ENCODE measurements at regions of chr11 and their contacts with region 1.

Region 1: DNA sequence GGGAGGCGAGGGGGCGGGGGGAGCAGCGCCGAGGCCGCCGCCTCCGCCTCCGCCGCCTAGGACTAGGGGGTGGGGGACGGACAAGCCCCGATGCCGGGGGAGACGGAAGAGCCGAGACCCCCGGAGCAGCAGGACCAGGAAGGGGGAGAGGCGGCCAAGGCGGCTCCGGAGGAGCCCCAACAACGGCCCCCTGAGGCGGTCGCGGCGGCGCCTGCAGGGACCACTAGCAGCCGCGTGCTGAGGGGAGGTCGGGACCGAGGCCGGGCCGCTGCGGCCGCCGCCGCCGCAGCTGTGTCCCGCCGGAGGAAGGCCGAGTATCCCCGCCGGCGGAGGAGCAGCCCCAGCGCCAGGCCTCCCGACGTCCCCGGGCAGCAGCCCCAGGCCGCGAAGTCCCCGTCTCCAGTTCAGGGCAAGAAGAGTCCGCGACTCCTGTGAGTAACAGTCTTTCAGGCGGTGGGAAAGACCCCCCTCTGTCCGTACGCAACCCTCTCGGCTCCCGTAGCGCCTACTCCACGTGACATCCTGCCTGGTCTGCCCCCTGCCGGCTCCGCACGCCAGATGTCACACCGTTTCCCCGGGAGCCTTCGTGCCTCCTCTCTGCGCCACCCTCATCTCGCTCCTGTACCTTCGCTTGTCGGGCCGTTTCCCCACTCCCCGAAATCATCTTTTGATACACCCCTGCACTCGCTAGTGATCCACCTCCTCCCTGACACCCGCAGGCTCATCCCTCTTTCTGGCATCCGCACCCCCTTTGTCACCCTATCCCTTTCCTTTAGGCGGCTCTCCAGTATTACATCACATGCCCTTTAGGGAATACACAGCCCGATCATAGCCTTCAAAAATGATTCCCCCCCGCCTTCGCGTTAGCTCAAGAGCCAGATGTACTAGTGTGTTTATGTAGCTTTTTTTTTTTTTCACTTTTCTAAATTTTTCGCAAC is 598 bp downstream of the ZFP91 start:
- DNase-seq: peak; percentile 94 to 96 (median 95)
- ATAC-seq: peak; percentile 43 to 78 (median 69)
- H3K4me3 ChIP-seq: peak overlapping the region; percentile 78 to 100 (median 90)
- H3K27ac ChIP-seq: peak overlapping the region; percentile 98 to 100 (median 99)
- H3K4me1 ChIP-seq: peaks cover 5 to 76% (median 53%) of the 10 kb centered on the region in 12 donors
- H3K27me3 ChIP-seq: no peaks in the 10 kb centered on the region
- CTCF ChIP-seq: peak; percentile 62 to 94 (median 80)
- POLR2A ChIP-seq: peak in 1 of 2 donors; percentile 47

Region 2: DNA sequence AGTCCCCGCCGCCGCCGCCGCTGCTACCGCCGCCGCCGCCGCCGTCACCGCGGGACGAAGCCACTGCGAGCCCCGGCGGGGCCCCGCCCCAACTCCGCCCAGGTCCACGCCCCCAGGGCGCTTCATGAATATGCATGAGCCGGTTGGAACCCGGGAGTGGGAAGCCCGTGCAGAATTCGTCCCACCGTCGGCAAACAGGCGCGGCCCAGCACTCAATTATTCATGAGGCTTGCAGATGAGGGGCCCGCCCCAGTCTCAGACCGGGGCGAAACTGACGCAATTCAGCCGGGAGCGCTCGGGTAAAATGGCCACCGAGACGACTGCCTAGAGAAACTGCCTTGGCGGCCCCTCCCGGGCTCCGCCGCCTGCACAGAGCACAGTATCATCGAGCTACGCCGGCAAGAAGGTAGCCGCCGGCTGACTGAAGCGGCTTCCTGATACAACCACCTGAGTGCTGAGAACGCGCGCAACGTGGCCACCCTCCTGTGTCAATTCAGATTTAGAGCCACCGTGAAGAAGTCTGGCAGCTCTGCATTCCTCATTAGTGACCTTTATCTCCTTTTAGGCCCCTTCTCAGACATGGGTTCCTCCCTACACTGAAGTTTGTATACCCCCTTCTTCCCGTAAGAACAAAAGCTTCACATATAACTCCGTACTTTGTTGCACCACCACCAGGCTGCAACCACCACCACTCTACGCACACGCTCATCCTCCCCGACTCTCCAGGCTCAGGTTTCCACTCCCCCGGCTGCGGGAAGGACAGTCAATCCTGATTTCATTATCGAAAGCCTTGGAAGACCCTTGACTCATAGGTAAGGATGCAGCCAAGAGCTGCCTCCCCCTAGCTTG is 1254.4 kb before region 1 on chr11 and contains the start of gene TNKS1BP1:
- intact Hi-C with region 1: loop called in 1 of 10 experiments (anchors 10 kb)
- DNase-seq: peak; percentile 97 to 98 (median 98)
- ATAC-seq: peak; percentile 84 to 90 (median 88)
- H3K4me3 ChIP-seq: peak within 1 kb of the TSS; percentile 67 to 89 (median 75)
- H3K27ac ChIP-seq: peak within 1 kb of the TSS; percentile 88 to 98 (median 94)
- H3K4me1 ChIP-seq: peaks cover 4 to 55% (median 32%) of the 10 kb centered on the region in 12 donors
- H3K27me3 ChIP-seq: no peaks in the 10 kb centered on the region
- CTCF ChIP-seq: peak in 1 of 12 donors; percentile 11
- POLR2A ChIP-seq: peak; percentile 9 to 90
- total RNA-seq, gene TNKS1BP1: 25.3 to 68.3 (median 33.1) TPM

Region 3: DNA sequence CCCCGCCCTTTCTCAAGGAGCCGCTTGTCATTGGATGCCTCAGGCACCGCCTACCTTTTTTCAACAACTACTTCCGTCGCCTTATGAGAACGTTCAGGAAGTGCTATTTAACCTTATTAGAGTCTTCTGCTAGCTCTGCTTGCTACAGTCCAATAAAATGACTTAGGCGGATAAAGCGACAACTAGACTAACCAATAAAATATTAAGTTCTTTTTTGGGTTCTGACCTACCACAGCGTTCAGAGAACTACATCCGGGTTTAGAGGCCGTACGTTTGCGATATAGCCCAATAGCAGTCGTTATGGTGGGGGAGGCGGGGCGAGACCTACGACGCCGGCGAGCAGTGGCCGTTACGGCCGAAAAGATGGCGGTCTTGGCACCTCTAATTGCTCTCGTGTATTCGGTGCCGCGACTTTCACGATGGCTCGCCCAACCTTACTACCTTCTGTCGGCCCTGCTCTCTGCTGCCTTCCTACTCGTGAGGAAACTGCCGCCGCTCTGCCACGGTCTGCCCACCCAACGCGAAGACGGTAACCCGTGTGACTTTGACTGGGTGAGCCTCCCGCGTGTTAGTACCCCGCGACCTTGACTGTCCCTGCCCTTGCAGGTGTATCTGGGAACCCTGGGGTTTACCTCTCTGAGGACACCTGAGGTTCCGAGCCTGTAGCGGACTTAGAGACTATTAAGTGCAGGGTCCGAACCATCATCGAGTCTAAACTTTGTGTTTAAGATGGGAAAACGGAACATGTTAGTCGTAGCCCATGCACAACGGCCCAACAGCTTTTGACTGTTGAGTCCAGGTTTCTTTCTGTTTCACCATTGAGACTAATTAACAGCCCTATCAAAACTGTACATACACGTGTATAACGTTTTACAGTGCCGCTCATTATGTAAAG is 867.0 kb before region 1 on chr11 and contains the start of gene TMX2:
- intact Hi-C with region 1: loop called in 1 of 10 experiments (anchors 5 kb)
- DNase-seq: peak; percentile 92 to 96 (median 94)
- ATAC-seq: peak; percentile 97 to 98 (median 97)
- H3K4me3 ChIP-seq: peak within 1 kb of the TSS; percentile 68 to 100 (median 90)
- H3K27ac ChIP-seq: peak within 1 kb of the TSS; percentile 73 to 95 (median 91)
- H3K4me1 ChIP-seq: peaks cover 0 to 47% (median 31%) of the 10 kb centered on the region in 12 donors
- H3K27me3 ChIP-seq: no peaks in the 10 kb centered on the region
- CTCF ChIP-seq: no peak
- POLR2A ChIP-seq: no peak
- total RNA-seq, gene TMX2: 46.7 to 78.2 (median 65.8) TPM

Region 4: GRCh38 chr11:58622344-58622743 is 42.9 kb after region 1 on chr11 and contains the start of gene CNTF:
- intact Hi-C with region 1: loop called (anchors 5 kb)
- DNase-seq: no peak
- ATAC-seq: peak; percentile 52 to 71 (median 64)
- H3K4me3 ChIP-seq: no peak within 1 kb of the TSS
- H3K27ac ChIP-seq: peak within 1 kb of the TSS in 2 of 12 donors; percentile 4 to 17
- H3K4me1 ChIP-seq: peaks cover 0 to 45% (median 21%) of the 10 kb centered on the region in 12 donors
- H3K27me3 ChIP-seq: no peaks in the 10 kb centered on the region
- CTCF ChIP-seq: no peak
- POLR2A ChIP-seq: no peak
- total RNA-seq, gene CNTF: 0.71 to 1.5 (median 0.96) TPM

Region 5: DNA sequence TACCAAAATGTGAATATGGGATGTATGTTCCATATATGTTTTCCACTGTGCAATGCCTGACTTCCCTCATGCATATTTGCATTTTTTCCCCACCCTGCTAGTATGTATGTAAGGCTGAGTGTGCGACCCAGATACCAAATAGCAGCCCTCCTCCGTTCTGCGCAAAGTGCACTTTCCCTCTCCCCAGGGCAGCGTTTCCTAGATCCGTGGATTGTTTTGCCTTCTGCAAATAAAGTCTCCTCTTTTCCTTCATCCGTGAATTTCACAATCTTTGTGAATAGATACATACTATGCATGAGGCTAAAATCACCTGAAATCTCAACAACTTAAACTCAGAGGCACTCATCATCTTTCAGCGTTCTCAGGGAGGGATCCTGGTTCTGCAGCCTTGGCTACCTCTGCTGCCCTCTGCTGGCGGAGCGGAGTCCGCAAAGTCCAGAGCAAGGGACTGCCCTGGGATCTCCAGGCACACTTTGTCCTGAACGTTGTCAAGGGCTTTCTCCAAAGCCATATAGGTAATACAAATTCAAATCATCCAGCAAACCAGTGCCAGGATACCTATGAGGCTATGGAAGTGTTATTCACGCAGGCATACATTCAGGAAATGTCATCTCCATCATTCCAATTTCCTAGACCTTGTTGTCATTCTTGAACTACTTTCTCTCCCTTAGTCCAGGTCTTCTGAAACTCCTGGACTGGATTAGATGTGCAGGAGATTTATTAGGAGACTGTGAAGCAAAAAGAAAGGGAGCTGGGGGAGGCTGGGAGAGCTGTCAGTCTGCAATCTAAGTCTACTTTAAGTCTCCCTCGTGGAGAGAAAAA is 96.1 kb after region 1 on chr11:
- intact Hi-C with region 1: loop called in 6 of 10 experiments (anchors 1 to 5 kb)
- DNase-seq: peak; percentile 67 to 87 (median 73)
- ATAC-seq: peak; percentile 88 to 93 (median 91)
- H3K4me3 ChIP-seq: no peak overlapping the region
- H3K27ac ChIP-seq: no peak overlapping the region
- H3K4me1 ChIP-seq: no peaks in the 10 kb centered on the region
- H3K27me3 ChIP-seq: peaks cover 0 to 19% (median 3%) of the 10 kb centered on the region in 9 donors
- CTCF ChIP-seq: peak; percentile 83 to 98 (median 90)
- POLR2A ChIP-seq: no peak

Region 6: DNA sequence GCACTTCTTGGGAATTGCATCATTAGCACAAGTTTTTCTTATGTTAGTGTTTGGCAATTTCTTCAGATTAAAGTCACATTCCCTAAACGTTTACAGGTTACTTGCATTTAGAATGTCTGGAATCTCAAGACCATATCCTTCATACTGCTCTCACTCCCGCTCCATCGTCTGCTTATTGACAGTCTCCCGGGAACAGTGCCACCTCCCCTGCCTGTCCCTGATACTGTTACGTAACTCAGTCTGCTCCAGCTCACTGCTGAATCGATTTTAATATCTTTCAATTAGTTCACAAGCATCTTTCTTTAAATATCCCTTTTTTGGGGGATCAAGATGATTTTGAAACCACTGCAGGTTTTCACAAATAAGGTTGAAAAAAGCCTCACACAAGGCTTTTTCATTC is 216.9 kb after region 1 on chr11:
- intact Hi-C with region 1: loop called in 1 of 10 experiments (anchors 10 kb)
- DNase-seq: no peak
- ATAC-seq: no peak
- H3K4me3 ChIP-seq: no peak overlapping the region
- H3K27ac ChIP-seq: no peak overlapping the region
- H3K4me1 ChIP-seq: no peaks in the 10 kb centered on the region
- H3K27me3 ChIP-seq: peaks cover 0 to 10% (median 0%) of the 10 kb centered on the region in 9 donors
- CTCF ChIP-seq: no peak
- POLR2A ChIP-seq: no peak

Measured in heart left ventricle (tissue), 16 donors.